PC-3 (cell line): ENCODE measurements at regions of chr10 and their contacts with region 1.

Region 1: DNA sequence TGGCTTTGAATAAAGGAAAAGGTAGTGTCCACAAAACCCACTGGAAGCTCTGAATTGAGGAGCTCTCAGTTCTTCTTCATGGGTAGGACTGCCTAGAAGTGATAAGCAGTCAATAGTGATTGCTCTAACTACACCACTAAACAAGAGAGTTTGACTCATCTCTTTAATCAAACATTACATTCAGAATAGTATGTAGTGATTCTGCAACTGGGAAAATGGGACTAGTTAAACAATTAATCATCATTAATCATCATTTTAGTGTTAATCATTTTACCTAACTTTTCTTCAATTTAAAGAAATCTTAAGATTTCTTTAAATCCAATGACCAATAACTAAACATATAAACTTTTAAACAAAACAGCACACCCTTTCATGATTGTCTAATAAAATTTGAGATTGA is 484.0 kb upstream of the FZD8 start:
- DNase-seq: peak; percentile 96
- ATAC-seq: peak; percentile 98
- H3K4me3 ChIP-seq: no peak overlapping the region
- H3K27ac ChIP-seq: peak overlapping the region; percentile 55
- H3K4me1 ChIP-seq: peaks cover 24% of the 10 kb centered on the region
- H3K27me3 ChIP-seq: no peaks in the 10 kb centered on the region
- CTCF ChIP-seq: no peak

Region 2: GRCh38 chr10:35795131-35795819 is 330.8 kb before region 1 on chr10:
- CTCF ChIA-PET with region 1: no interaction called
- POLR2A ChIA-PET with region 1: no interaction called
- intact Hi-C with region 1: no loop called
- DNase-seq: peak; percentile 100
- ATAC-seq: peak; percentile 94
- H3K4me3 ChIP-seq: peak overlapping the region; percentile 12
- H3K27ac ChIP-seq: peak overlapping the region; percentile 80
- H3K4me1 ChIP-seq: peaks cover 46% of the 10 kb centered on the region
- H3K27me3 ChIP-seq: no peaks in the 10 kb centered on the region
- CTCF ChIP-seq: no peak

Region 3: DNA sequence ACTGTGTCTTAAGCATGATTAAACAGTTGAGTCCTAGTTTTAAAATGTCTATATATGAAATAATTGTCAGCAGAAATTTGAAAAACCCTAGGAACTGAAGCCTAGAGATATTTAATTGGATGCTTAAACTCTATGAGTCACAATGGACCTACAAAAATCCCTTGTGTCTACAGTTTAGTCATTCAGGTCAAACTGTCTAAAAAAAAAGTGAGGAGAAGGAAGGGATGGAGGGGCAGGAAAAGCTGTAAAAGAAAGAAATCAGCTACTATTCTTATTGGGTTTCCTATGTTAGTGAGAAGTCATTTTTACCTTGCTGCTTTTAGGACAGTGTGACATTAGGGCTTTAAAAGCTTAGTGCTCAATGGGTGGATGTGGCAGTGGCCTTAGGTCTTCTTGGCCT is 77.8 kb before region 1 on chr10:
- CTCF ChIA-PET with region 1: no interaction called
- POLR2A ChIA-PET with region 1: no interaction called
- intact Hi-C with region 1: loop called (anchors 2 kb)
- DNase-seq: peak; percentile 94
- ATAC-seq: peak; percentile 100
- H3K4me3 ChIP-seq: no peak overlapping the region
- H3K27ac ChIP-seq: peak overlapping the region; percentile 23
- H3K4me1 ChIP-seq: peaks cover 11% of the 10 kb centered on the region
- H3K27me3 ChIP-seq: no peaks in the 10 kb centered on the region
- CTCF ChIP-seq: no peak

Region 4: GRCh38 chr10:36096571-36096970 is 29.5 kb before region 1 on chr10:
- CTCF ChIA-PET with region 1: no interaction called
- POLR2A ChIA-PET with region 1: no interaction called
- intact Hi-C with region 1: loop called (anchors 1 kb)
- DNase-seq: peak; percentile 97
- ATAC-seq: peak; percentile 71
- H3K4me3 ChIP-seq: no peak overlapping the region
- H3K27ac ChIP-seq: peak overlapping the region; percentile 58
- H3K4me1 ChIP-seq: peaks cover 29% of the 10 kb centered on the region
- H3K27me3 ChIP-seq: no peaks in the 10 kb centered on the region
- CTCF ChIP-seq: no peak

Region 5: GRCh38 chr10:36324831-36325387 is 198.8 kb after region 1 on chr10:
- CTCF ChIA-PET with region 1: no interaction called
- POLR2A ChIA-PET with region 1: no interaction called
- intact Hi-C with region 1: loop called (anchors 5 kb)
- DNase-seq: peak; percentile 89
- ATAC-seq: peak; percentile 88
- H3K4me3 ChIP-seq: no peak overlapping the region
- H3K27ac ChIP-seq: peak overlapping the region; percentile 57
- H3K4me1 ChIP-seq: peaks cover 18% of the 10 kb centered on the region
- H3K27me3 ChIP-seq: no peaks in the 10 kb centered on the region
- CTCF ChIP-seq: no peak